OCI-LY7 (cell line): ENCODE measurements at regions of chr1 and their contacts with region 1.

Region 1: GRCh38 chr1:42816585-42817434 is at the starts of genes ERMAP and SVBP:
- DNase-seq: peak; percentile 93
- H3K4me3 ChIP-seq: peak within 1 kb of the TSS; percentile 84
- H3K27ac ChIP-seq: peak within 1 kb of the TSS; percentile 57
- H3K4me1 ChIP-seq: peaks cover 21% of the 10 kb centered on the region
- CTCF ChIP-seq: no peak; the same call in 1 of the 2 replicates
- total RNA-seq, gene ERMAP: 2.3 and 2.7 TPM in 2 replicates
- total RNA-seq, gene SVBP: 23.1 and 32.3 TPM in 2 replicates

Region 2: DNA sequence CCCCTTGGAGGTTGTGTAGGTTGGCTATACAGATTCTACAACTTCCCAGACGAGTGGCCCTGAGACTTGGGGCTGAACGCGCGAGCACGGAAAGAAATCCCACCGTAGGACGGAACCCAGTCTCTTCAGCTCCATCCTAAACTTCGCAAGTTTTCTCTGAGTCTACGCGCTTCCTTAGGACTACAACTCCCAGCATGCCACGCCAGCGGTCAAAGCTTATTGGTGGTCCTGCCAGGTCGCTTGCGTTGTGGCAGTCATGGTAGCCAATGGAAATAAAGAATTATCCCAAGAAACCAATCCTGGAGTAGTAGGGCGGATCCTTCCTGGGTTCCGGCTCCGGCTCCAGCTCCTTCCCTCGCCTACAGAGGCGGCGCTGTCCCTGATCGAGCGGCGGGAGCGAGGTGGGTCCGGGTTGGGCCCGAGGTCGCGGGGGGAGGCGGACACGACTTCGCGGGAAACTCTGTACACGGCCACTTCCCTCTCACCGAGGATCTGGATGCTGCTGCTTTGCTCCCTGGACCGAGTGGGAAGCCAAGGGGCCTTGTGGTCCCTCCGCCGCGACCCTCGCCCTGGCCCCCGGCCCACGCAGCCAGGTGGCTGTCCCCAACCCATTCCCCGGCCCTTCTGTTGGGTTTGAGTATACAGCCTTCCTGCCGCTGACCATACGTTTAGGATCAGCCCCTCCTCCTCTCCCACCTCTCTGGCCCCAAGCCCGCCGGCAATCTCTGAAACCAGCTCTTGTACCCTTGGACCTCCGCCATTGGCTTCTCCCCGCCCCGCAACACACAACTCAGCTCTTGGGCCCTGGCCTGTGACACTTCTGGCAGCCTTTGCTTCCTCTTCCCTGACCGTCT is 29.7 kb after region 1 on chr1 and contains the start of gene ZNF691:
- CTCF ChIA-PET with region 1: interaction called, 3 read pairs
- POLR2A ChIA-PET with region 1: interaction called, 22 read pairs
- intact Hi-C with region 1: loop called (anchors 2 kb)
- DNase-seq: peak; percentile 97
- H3K4me3 ChIP-seq: peak within 1 kb of the TSS; percentile 89
- H3K27ac ChIP-seq: peak within 1 kb of the TSS; percentile 73
- H3K4me1 ChIP-seq: peaks cover 48% of the 10 kb centered on the region
- CTCF ChIP-seq: peak; percentile 59
- total RNA-seq, gene ZNF691: 14.1 and 17.8 TPM in 2 replicates